Heart left ventricle (tissue), 16 donors: ENCODE measurements at regions of chr4 and their contacts with region 1.

Region 1: GRCh38 chr4:76738086-76738931 is 159.6 kb downstream of the SOWAHB start:
- DNase-seq: peak in 3 of 5 donors; percentile 29 to 66 (median 59)
- ATAC-seq: peak; percentile 63 to 92 (median 90)
- H3K4me3 ChIP-seq: no peak overlapping the region
- H3K27ac ChIP-seq: peak overlapping the region in 9 of 12 donors; percentile 20 to 85 (median 64)
- H3K4me1 ChIP-seq: peaks cover 0 to 22% (median 10%) of the 10 kb centered on the region in 12 donors
- H3K27me3 ChIP-seq: no peaks in the 10 kb centered on the region
- CTCF ChIP-seq: no peak
- POLR2A ChIP-seq: no peak

Region 2: GRCh38 chr4:76219299-76220055 is 518.8 kb before region 1 on chr4:
- intact Hi-C with region 1: no loop called
- DNase-seq: no peak
- ATAC-seq: peak in 3 of 4 donors; percentile 48 to 79 (median 75)
- H3K4me3 ChIP-seq: no peak overlapping the region
- H3K27ac ChIP-seq: peak overlapping the region in 1 of 12 donors; percentile 43
- H3K4me1 ChIP-seq: peaks cover 0 to 40% (median 9%) of the 10 kb centered on the region in 12 donors
- H3K27me3 ChIP-seq: no peaks in the 10 kb centered on the region
- CTCF ChIP-seq: no peak
- POLR2A ChIP-seq: no peak

Region 3: DNA sequence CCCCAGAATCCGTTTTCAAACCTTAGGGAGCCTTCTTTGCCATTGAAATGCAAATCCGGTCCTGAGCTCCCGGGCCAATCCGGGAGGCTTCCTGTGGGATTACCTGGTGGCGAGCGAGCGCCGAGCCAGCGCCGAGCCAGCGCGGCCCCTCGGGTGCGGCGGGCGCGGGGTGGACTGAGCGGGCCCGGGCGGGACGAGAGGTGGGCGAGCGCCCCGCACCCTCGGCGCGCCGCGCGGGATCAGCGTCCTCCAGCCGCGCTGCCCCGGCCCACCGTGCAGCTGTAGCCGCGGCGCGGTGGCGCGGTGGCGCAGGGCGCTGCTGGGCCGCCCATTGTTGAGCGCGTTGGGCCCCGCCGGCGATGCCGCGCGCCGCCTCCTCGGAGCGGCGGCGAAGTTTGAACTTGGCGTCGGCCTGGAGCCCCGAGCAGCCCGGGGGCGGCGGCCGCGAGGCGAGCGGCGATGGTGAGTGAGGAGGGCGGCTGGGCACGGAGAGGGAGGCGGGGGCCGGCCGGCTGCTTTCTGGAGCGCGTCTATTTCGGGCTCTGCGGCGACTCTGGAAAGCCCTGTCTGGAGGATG is 49.0 kb before region 1 on chr4:
- intact Hi-C with region 1: loop called in 1 of 10 experiments (anchors 5 kb)
- DNase-seq: peak; percentile 38 to 69 (median 59)
- ATAC-seq: peak in 3 of 4 donors; percentile 76 to 86 (median 82)
- H3K4me3 ChIP-seq: peak overlapping the region; percentile 37 to 71 (median 56)
- H3K27ac ChIP-seq: peak overlapping the region in 6 of 12 donors; percentile 41 to 69 (median 52)
- H3K4me1 ChIP-seq: peaks cover 0 to 36% (median 20%) of the 10 kb centered on the region in 12 donors
- H3K27me3 ChIP-seq: peaks cover 0 to 69% (median 0%) of the 10 kb centered on the region in 9 donors
- CTCF ChIP-seq: no peak
- POLR2A ChIP-seq: no peak

Region 4: GRCh38 chr4:77007358-77008191 is 269.3 kb after region 1 on chr4:
- intact Hi-C with region 1: no loop called
- DNase-seq: peak in 2 of 5 donors; percentile 37 to 45
- ATAC-seq: peak in 3 of 4 donors; percentile 72 to 89 (median 77)
- H3K4me3 ChIP-seq: no peak overlapping the region
- H3K27ac ChIP-seq: peak overlapping the region in 8 of 12 donors; percentile 4 to 28 (median 10)
- H3K4me1 ChIP-seq: peaks cover 4 to 78% (median 39%) of the 10 kb centered on the region in 12 donors
- H3K27me3 ChIP-seq: no peaks in the 10 kb centered on the region
- CTCF ChIP-seq: no peak
- POLR2A ChIP-seq: no peak

Region 5: DNA sequence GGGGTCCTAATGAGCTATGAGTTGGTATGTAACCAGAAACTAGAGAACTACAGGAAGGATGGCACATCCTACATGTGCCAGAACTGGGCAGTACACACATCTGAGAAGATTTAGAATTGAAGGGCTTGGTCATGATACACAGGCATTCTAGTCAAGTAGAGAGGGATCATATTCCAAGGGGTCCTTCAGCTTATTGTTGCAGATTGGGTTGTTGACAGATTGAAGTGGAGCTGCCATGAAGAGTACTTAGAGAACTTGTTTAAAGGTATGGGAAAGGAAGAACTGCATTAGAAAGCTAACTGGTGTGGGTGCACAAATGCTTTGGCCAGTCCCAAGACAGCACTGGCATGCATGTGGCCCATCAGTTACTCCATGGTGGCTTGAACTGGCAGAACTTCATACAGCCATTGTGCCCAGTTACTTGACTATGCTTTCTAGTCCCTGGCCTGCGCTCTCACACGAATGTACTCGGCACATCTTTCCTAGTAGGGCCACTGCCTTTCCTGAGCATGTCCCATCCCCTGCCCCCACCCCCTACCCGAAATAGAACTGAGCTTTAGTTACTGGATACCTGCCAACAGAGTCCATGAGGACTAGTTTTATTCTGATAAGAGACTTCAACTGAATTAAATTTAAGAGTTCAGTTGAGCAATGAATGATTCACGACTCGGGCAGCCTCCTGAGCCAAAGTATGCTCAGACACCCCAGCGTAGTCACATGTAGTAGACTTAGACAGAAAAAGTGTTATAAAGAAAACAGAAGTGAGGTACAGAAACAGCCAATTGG is 482.7 kb after region 1 on chr4:
- intact Hi-C with region 1: no loop called
- DNase-seq: peak in 4 of 5 donors; percentile 63 to 69 (median 68)
- ATAC-seq: peak; percentile 90 to 93 (median 92)
- H3K4me3 ChIP-seq: no peak overlapping the region
- H3K27ac ChIP-seq: peak overlapping the region in 3 of 12 donors; percentile 9 to 24 (median 20)
- H3K4me1 ChIP-seq: peaks cover 0 to 16% (median 4%) of the 10 kb centered on the region in 12 donors
- H3K27me3 ChIP-seq: no peaks in the 10 kb centered on the region
- CTCF ChIP-seq: no peak
- POLR2A ChIP-seq: no peak